ENCODE measurements at regions of chr2 and their contacts with region 1.

Region 1: GRCh38 chr2:102082571-102083392 is 59.8 kb upstream of the IL1R1 start:
- DNase-seq: peak; percentile 80
- H3K4me3 Mint-ChIP-seq: peak overlapping the region; percentile 57
- H3K27ac Mint-ChIP-seq: peak overlapping the region; percentile 92
- H3K4me1 Mint-ChIP-seq: peaks cover 64% of the 10 kb centered on the region
- H3K27me3 Mint-ChIP-seq: no peaks in the 10 kb centered on the region

Region 2: GRCh38 chr2:101717071-101717845 is 365.5 kb before region 1 on chr2:
- CTCF ChIA-PET with region 1: no interaction called
- POLR2A ChIA-PET with region 1: no interaction called
- intact Hi-C with region 1: loop called (anchors 5 kb)
- DNase-seq: peak; percentile 75
- H3K4me3 Mint-ChIP-seq: peak overlapping the region; percentile 27
- H3K27ac Mint-ChIP-seq: peak overlapping the region; percentile 88
- H3K4me1 Mint-ChIP-seq: peaks cover 85% of the 10 kb centered on the region
- H3K27me3 Mint-ChIP-seq: no peaks in the 10 kb centered on the region

Region 3: DNA sequence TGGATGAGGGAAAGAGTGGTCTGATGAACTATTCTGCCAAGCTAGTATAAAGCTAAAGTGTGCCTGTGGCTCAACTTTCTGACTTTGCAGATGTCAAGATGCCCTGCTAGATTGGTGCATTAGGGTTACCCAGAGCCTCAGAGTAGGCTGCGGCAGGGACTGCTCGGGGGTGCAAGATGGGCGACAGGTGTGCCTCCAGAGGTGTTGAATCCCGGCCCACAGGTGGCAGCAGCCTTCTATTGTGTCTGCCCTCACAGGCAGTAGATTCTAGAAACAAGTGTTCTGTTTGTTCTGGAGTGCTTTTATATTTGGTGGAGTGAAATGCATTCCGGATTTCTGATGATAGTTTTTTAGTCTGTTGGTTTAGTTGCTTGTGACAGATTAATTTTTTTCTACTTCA is 222.6 kb before region 1 on chr2:
- CTCF ChIA-PET with region 1: no interaction called
- POLR2A ChIA-PET with region 1: no interaction called
- intact Hi-C with region 1: no loop called
- DNase-seq: no peak
- H3K4me3 Mint-ChIP-seq: no peak overlapping the region
- H3K27ac Mint-ChIP-seq: no peak overlapping the region
- H3K4me1 Mint-ChIP-seq: peaks cover 2% of the 10 kb centered on the region
- H3K27me3 Mint-ChIP-seq: no peaks in the 10 kb centered on the region

Region 4: GRCh38 chr2:102027036-102027980 is 55.5 kb before region 1 on chr2:
- CTCF ChIA-PET with region 1: no interaction called
- POLR2A ChIA-PET with region 1: interaction called, 3 read pairs
- intact Hi-C with region 1: loop called (anchors 1 kb)
- DNase-seq: no peak
- H3K4me3 Mint-ChIP-seq: no peak overlapping the region
- H3K27ac Mint-ChIP-seq: peak overlapping the region; percentile 63
- H3K4me1 Mint-ChIP-seq: peaks cover 64% of the 10 kb centered on the region
- H3K27me3 Mint-ChIP-seq: no peaks in the 10 kb centered on the region

Region 5: GRCh38 chr2:102063941-102064678 is 18.7 kb before region 1 on chr2:
- CTCF ChIA-PET with region 1: interaction called, 19 read pairs
- POLR2A ChIA-PET with region 1: interaction called, 76 read pairs
- intact Hi-C with region 1: loop called (anchors 1 kb)
- DNase-seq: peak; percentile 81
- H3K4me3 Mint-ChIP-seq: no peak overlapping the region
- H3K27ac Mint-ChIP-seq: peak overlapping the region; percentile 88
- H3K4me1 Mint-ChIP-seq: peaks cover 44% of the 10 kb centered on the region
- H3K27me3 Mint-ChIP-seq: peaks cover 6% of the 10 kb centered on the region

Region 6: DNA sequence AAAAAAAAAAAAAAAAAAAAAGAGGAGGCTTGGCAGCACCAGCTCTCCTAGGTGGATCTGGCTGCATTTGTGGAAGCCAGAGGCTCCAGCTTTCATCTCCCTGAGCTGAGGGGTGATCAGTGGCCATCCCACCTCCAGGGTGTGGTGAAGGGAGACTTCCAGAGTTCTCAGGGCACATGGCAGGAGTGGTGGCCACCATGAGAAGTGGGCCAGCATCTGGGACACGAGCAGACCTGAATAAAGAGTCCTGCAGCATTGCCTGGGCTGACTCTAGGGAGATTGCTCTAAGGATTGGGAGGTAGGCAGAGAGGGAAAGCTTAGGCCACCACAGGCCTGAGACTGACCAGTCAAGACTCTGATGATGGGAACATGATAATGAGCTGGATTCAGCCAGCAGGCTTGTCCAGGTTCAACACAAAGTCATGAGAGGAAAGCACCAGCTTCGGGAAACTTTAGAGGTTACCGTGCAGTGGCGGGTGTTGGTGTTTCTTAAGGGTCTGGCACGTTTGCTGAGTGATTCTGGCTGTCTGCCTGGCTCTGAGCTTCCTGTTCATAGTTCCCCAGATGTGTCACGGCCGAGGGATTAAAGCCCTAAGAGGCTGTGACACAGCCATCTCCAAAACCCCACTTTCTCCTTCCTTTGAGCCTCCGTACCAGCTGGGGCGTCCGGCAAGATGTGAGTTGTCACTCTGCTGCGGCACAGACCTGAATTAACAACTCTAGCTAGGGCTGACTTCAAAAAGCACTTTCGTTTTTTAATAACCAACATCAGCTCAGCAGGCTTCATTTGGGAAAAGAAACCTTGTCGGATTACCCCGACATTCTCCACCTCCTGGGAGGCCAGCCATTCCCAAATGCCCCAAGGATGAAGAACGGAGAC is 21.4 kb after region 1 on chr2:
- CTCF ChIA-PET with region 1: interaction called, 9 read pairs
- POLR2A ChIA-PET with region 1: interaction called, 28 read pairs
- intact Hi-C with region 1: loop called (anchors 1 kb)
- DNase-seq: peak; percentile 92
- H3K4me3 Mint-ChIP-seq: peak overlapping the region; percentile 81
- H3K27ac Mint-ChIP-seq: peak overlapping the region; percentile 86
- H3K4me1 Mint-ChIP-seq: peaks cover 50% of the 10 kb centered on the region
- H3K27me3 Mint-ChIP-seq: peaks cover 12% of the 10 kb centered on the region

Region 7: DNA sequence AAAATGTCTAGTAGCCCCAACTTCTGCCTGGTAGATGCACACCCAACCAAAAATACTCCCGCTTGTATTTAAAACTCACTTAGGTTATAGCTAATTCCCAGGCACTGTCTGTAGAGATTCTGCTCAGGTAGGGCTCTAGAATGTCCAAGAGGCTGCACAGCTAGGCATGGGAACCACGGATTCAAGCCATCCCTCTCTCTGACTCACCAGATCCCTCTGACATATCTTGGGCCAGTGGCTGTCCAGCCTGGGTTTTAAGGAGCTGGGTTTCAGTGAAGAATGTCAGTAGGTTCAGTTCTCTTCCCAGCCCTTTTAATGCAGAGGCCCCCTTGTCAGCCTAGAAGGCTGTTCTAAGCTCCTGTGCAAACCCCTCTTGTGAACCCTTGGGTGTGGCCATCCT is 43.9 kb after region 1 on chr2:
- CTCF ChIA-PET with region 1: no interaction called
- POLR2A ChIA-PET with region 1: interaction called, 8 read pairs
- intact Hi-C with region 1: loop called (anchors 1 kb)
- DNase-seq: no peak
- H3K4me3 Mint-ChIP-seq: no peak overlapping the region
- H3K27ac Mint-ChIP-seq: peak overlapping the region; percentile 90
- H3K4me1 Mint-ChIP-seq: peaks cover 38% of the 10 kb centered on the region
- H3K27me3 Mint-ChIP-seq: peaks cover 12% of the 10 kb centered on the region

Region 8: DNA sequence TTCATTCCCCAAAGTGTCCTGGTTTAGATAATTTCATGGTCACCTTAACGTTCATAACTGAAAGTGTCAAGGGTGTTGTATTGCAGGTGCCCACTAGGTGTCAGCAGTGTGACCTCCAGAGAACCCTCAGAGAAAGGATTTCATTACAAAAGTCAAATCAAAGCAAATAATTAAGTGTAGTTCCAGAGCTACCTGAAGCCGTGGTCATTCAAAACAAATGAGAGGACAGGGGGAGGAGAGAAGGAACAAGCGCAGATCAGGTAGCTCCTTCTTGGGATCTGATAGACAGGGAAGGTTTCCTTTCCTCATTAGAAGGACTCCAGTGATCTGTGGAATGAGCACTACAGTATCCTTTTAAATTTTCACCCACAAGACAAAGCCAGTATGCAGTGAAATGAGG is 390.2 kb after region 1 on chr2 and contains the start of gene SLC9A4:
- CTCF ChIA-PET with region 1: no interaction called
- POLR2A ChIA-PET with region 1: no interaction called
- intact Hi-C with region 1: no loop called
- DNase-seq: peak; percentile 71
- H3K4me3 Mint-ChIP-seq: no peak within 1 kb of the TSS
- H3K27ac Mint-ChIP-seq: no peak within 1 kb of the TSS
- H3K4me1 Mint-ChIP-seq: no peaks in the 10 kb centered on the region
- H3K27me3 Mint-ChIP-seq: peaks cover 24% of the 10 kb centered on the region
- total RNA-seq, gene SLC9A4: 0.10 TPM in 1 of 2 experiments, not detected in the other

Region 9: GRCh38 chr2:102592597-102592996 is 509.8 kb after region 1 on chr2:
- CTCF ChIA-PET with region 1: no interaction called
- POLR2A ChIA-PET with region 1: no interaction called
- intact Hi-C with region 1: no loop called
- DNase-seq: peak; percentile 12
- H3K4me3 Mint-ChIP-seq: no peak overlapping the region
- H3K27ac Mint-ChIP-seq: no peak overlapping the region
- H3K4me1 Mint-ChIP-seq: no peaks in the 10 kb centered on the region
- H3K27me3 Mint-ChIP-seq: peaks cover 9% of the 10 kb centered on the region